GM10248 (cell line): ENCODE measurements at regions of chr18 and their contacts with region 1.

Region 1: GRCh38 chr18:36064027-36064808 is 3.1 kb downstream of the RPRD1A start:
- DNase-seq: no peak
- CTCF ChIP-seq: no peak

Region 2: GRCh38 chr18:35736696-35737095 is 327.5 kb before region 1 on chr18:
- CTCF ChIA-PET with region 1: no interaction called
- POLR2A ChIA-PET with region 1: no interaction called
- DNase-seq: no peak
- CTCF ChIP-seq: no peak

Region 3: GRCh38 chr18:36015629-36016028 is 48.6 kb before region 1 on chr18:
- CTCF ChIA-PET with region 1: interaction called, 15 read pairs
- POLR2A ChIA-PET with region 1: no interaction called
- DNase-seq: peak; percentile 55
- CTCF ChIP-seq: no peak

Region 4: GRCh38 chr18:36041146-36041545 is 23.1 kb before region 1 on chr18:
- CTCF ChIA-PET with region 1: no interaction called
- POLR2A ChIA-PET with region 1: no interaction called
- DNase-seq: no peak
- CTCF ChIP-seq: no peak